HepG2 (cell line): ENCODE measurements at regions of chr5 and their contacts with region 1.

Region 1: GRCh38 chr5:116947691-116948528 is 373.3 kb upstream of the SEMA6A start:
- DNase-seq: peak; percentile 76
- ATAC-seq: peak; percentile 100
- H3K4me3 ChIP-seq: no peak overlapping the region; a peak in 1 of 6 replicates
- H3K27ac ChIP-seq: no peak overlapping the region
- H3K4me1 ChIP-seq: peaks cover 6% of the 10 kb centered on the region
- H3K27me3 ChIP-seq: no peaks in the 10 kb centered on the region
- CTCF ChIP-seq: peak; percentile 93
- EP300 ChIP-seq: no peak
- POLR2A ChIP-seq: no peak
- RAD21 ChIP-seq: peak; percentile 89

Region 2: GRCh38 chr5:116137544-116138378 is 810.1 kb before region 1 on chr5:
- CTCF ChIA-PET with region 1: interaction called, 3 read pairs
- POLR2A ChIA-PET with region 1: no interaction called
- in situ Hi-C with region 1: loop called (anchors 25 kb)
- intact Hi-C with region 1: loop called (anchors 2 kb)
- DNase-seq: peak; percentile 46
- ATAC-seq: peak; percentile 56; the same call in 2 of the 3 replicates
- H3K4me3 ChIP-seq: no peak overlapping the region
- H3K27ac ChIP-seq: no peak overlapping the region
- H3K4me1 ChIP-seq: no peaks in the 10 kb centered on the region
- H3K27me3 ChIP-seq: no peaks in the 10 kb centered on the region
- CTCF ChIP-seq: peak; percentile 73
- EP300 ChIP-seq: no peak
- POLR2A ChIP-seq: no peak
- RAD21 ChIP-seq: 0 out of 2 replicates have a peak, but pooled peaks have one; percentile 51

Region 3: DNA sequence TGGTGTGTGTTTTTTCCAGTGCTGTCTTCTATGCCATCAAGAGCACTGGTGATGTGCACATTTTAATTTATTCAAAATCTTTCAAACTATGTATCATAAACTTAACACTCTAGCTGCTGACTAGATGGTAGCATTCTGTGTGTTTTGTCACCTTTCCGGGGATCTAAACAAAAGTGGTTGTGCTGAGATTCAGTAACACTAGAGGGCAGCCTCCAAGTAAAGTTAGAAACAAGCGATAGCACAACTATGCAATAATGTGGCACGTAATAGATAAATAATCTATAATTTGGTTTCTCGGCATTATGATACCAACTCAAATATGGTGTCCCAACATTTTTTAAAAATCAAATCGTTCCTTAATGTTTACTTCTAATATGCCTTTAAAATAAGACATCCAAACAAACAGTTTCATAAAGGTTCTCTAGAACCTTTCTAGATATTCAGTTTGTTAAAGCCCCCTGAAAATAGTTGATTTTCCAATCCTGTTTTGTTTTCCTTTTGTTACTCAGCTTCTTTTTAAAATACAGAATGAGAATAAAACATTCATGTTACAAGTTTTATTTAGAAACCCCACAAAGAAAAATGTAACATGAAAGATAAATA is 390.1 kb before region 1 on chr5:
- CTCF ChIA-PET with region 1: interaction called, 3 read pairs
- POLR2A ChIA-PET with region 1: no interaction called
- in situ Hi-C with region 1: no loop called
- intact Hi-C with region 1: loop called (anchors 1 kb)
- DNase-seq: peak; percentile 39
- ATAC-seq: peak; percentile 60; the same call in 2 of the 3 replicates
- H3K4me3 ChIP-seq: no peak overlapping the region
- H3K27ac ChIP-seq: no peak overlapping the region
- H3K4me1 ChIP-seq: peaks cover 22% of the 10 kb centered on the region
- H3K27me3 ChIP-seq: no peaks in the 10 kb centered on the region
- CTCF ChIP-seq: peak; percentile 67
- EP300 ChIP-seq: no peak
- POLR2A ChIP-seq: no peak
- RAD21 ChIP-seq: peak; percentile 67

Region 4: GRCh38 chr5:116652196-116652729 is 295.6 kb before region 1 on chr5:
- CTCF ChIA-PET with region 1: no interaction called
- POLR2A ChIA-PET with region 1: no interaction called
- in situ Hi-C with region 1: no loop called
- intact Hi-C with region 1: loop called (anchors 10 kb)
- DNase-seq: peak; percentile 97
- ATAC-seq: peak; percentile 100
- H3K4me3 ChIP-seq: peak overlapping the region in 1 of 3 experiments; percentile 19; a peak in 1 of 6 replicates
- H3K27ac ChIP-seq: no peak overlapping the region
- H3K4me1 ChIP-seq: peaks cover 28% of the 10 kb centered on the region
- H3K27me3 ChIP-seq: no peaks in the 10 kb centered on the region; a peak in 1 of 5 replicates
- CTCF ChIP-seq: no peak
- EP300 ChIP-seq: peak; percentile 25 to 78; a peak in 2 of 4 replicates
- POLR2A ChIP-seq: no peak
- RAD21 ChIP-seq: no peak

Region 5: DNA sequence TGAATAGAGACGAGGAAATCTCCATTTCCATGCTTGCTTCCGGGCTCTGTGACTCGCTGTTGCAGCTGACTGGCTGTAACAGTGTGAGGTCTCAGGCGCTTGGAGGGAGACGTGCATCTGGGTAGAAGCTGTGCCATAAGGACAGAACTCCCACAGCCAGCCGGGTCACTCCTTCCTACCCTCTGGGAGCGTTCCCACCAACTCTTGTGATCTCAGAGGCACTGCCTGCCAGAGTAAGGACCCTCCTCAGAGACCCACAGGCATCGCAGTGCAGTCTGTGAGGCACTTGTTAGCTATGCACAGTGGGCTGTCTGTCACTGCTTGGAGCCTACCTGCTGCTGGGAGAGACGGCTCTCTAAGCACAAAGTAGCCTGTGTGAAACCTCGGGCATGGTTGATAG is 169.9 kb before region 1 on chr5:
- CTCF ChIA-PET with region 1: no interaction called
- POLR2A ChIA-PET with region 1: no interaction called
- in situ Hi-C with region 1: no loop called
- intact Hi-C with region 1: loop called (anchors 10 kb)
- DNase-seq: no peak
- ATAC-seq: peak; percentile 79
- H3K4me3 ChIP-seq: peak overlapping the region in 1 of 3 experiments; percentile 11; a peak in 1 of 6 replicates
- H3K27ac ChIP-seq: no peak overlapping the region
- H3K4me1 ChIP-seq: peaks cover 15% of the 10 kb centered on the region; the same call in 1 of the 2 replicates
- H3K27me3 ChIP-seq: peaks cover 0 to 8% of the 10 kb centered on the region in 2 experiments; a peak in 1 of 5 replicates
- CTCF ChIP-seq: no peak
- EP300 ChIP-seq: no peak
- POLR2A ChIP-seq: no peak
- RAD21 ChIP-seq: no peak